Calu3 (cell line): ENCODE measurements at regions of chr12 and their contacts with region 1.

Region 1: DNA sequence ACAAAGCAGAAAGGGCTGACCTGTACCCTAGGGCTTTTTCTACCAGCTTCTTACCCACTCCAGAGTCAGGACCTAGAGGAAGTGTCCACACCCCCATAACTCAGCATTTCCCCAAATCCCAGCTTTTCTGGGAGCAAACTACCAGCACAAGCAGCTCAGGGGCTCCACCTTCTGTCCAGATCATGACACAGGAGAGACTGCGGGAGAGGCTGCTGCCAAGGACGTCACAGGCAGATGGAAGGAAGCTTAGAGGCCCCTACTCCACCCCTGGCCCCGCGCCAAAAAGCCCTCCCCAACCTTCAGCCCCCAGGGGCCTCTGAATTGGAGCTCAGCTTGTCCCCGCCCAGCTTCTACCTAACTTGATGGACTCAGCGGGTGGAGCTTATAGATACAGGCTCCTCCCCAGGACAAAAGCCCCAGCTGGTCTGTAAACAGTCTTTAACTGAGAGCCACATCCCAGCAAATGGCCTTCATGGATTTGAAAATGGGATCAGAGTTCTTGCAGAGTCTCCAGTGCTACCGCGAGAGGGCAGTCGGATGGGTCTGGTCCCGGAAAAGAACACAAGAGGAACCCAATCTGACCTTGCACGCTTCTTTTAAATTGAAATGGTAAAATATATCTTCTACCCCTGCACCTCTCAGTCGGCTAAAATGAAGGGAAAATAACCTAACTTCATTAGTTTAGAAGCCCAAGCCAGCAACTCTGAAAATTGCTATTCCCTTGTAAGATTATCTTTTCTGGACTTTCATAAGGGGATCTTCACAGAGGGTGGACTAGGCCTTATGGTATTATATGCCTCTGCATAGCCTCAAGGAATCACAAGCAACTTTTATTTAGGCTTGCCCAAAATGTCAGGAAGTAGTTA is 6.8 kb upstream of the BAZ2A start:
- DNase-seq: peak; percentile 99
- H3K4me3 Mint-ChIP-seq: peak overlapping the region; percentile 89
- H3K27ac Mint-ChIP-seq: peak overlapping the region; percentile 70
- H3K4me1 Mint-ChIP-seq: peaks cover 44% of the 10 kb centered on the region
- H3K27me3 Mint-ChIP-seq: no peaks in the 10 kb centered on the region
- CTCF ChIP-seq: peak; percentile 74

Region 2: DNA sequence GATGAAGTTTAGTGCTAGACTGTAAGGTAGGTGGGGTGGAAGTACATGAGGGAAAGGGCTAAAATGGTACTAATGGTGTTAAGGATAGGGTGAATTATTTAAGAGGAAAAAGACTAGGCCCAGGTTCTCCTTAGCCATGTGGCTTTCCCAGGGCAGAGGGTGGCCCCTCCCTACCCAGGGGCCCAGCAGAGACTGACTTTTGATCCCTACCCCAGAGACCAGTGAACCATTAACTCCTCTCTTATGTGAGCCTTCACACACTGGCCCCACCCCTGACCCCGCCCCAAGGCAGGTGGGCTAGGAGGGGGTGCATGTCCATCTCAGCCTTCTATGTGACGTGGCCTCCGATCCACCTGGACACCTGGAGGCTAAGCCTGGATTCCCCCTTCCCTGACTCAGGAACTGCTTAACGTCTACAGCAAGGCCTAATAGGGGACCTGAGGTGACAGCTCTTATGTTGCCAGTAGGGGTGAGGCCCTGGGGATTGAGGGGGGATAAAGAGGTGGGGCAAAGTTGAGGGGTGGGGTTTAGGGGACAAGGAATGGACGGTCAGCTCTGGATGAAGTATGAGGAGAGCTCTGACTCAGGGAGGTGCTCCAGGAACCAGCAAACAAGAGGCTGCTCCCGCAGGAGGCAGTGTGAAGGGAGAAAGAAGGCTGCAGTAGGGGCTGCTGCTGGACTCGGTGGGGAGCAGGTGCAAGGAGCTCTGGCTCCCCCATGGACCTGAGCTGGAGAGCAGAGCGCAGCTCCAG is 406.3 kb before region 1 on chr12:
- CTCF ChIA-PET with region 1: no interaction called
- intact Hi-C with region 1: no loop called
- DNase-seq: no peak
- H3K4me3 Mint-ChIP-seq: no peak overlapping the region
- H3K27ac Mint-ChIP-seq: no peak overlapping the region
- H3K4me1 Mint-ChIP-seq: peaks cover 12% of the 10 kb centered on the region
- H3K27me3 Mint-ChIP-seq: no peaks in the 10 kb centered on the region
- CTCF ChIP-seq: no peak

Region 3: GRCh38 chr12:56521590-56522371 is 115.1 kb before region 1 on chr12 and contains the start of gene RBMS2:
- CTCF ChIA-PET with region 1: interaction called, 21 read pairs
- intact Hi-C with region 1: no loop called
- DNase-seq: peak; percentile 81
- H3K4me3 Mint-ChIP-seq: peak within 1 kb of the TSS; percentile 77
- H3K27ac Mint-ChIP-seq: peak within 1 kb of the TSS; percentile 75
- H3K4me1 Mint-ChIP-seq: peaks cover 52% of the 10 kb centered on the region
- H3K27me3 Mint-ChIP-seq: no peaks in the 10 kb centered on the region
- CTCF ChIP-seq: no peak
- total RNA-seq, gene RBMS2: 96.4 and 105 TPM in 2 replicates

Region 4: GRCh38 chr12:56601503-56601902 is 35.4 kb before region 1 on chr12:
- CTCF ChIA-PET with region 1: interaction called, 17 read pairs
- intact Hi-C with region 1: no loop called
- DNase-seq: peak; percentile 52
- H3K4me3 Mint-ChIP-seq: no peak overlapping the region
- H3K27ac Mint-ChIP-seq: peak overlapping the region; percentile 5
- H3K4me1 Mint-ChIP-seq: no peaks in the 10 kb centered on the region
- H3K27me3 Mint-ChIP-seq: no peaks in the 10 kb centered on the region
- CTCF ChIP-seq: no peak

Region 5: GRCh38 chr12:56688129-56688845 is 51.4 kb after region 1 on chr12 and contains the start of gene PTGES3:
- CTCF ChIA-PET with region 1: interaction called, 9 read pairs
- intact Hi-C with region 1: loop called (anchors 5 kb)
- DNase-seq: peak; percentile 99
- H3K4me3 Mint-ChIP-seq: peak within 1 kb of the TSS; percentile 99
- H3K27ac Mint-ChIP-seq: peak within 1 kb of the TSS; percentile 100
- H3K4me1 Mint-ChIP-seq: peaks cover 12% of the 10 kb centered on the region
- H3K27me3 Mint-ChIP-seq: no peaks in the 10 kb centered on the region
- CTCF ChIP-seq: no peak
- total RNA-seq, gene PTGES3: 435 and 437 TPM in 2 replicates

Region 6: DNA sequence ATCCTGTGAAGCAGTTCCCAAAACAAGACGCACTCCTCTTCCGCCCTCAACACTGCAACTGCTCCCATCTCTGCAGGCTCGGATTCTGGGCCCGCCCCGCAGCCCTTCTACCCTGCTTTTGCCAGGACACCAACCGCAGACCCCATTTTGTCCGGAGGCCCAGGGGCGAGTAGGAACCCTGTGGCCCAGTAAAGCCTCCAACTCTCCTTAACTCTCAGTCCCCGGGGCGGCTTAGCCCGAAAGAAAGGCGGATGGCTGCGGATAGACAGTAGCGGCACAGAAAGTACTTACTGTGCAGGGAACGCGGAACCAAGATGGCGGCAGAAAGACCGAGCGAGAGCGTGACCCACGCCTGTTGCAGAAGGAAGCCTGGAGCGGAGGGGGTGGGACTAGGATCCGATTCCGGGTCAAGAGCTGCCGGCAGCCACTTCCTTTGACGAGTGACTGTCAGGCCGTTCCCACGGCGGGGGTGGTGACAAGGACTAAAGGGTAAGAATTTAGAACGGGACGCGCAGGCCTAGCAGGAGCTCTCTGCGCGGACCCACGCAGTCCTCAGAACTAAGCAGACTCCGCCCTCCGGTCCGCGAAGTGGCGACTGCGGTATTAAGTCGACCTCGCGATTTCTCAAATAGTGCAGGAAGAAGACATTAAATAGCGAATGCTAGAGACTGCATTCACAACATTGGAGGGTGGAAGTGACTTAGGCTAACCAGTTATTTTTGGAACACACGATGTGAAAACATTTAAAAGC is 88.2 kb after region 1 on chr12 and contains the start of gene NACA:
- CTCF ChIA-PET with region 1: interaction called, 4 read pairs
- intact Hi-C with region 1: loop called (anchors 10 kb)
- DNase-seq: peak; percentile 98
- H3K4me3 Mint-ChIP-seq: peak within 1 kb of the TSS; percentile 97
- H3K27ac Mint-ChIP-seq: peak within 1 kb of the TSS; percentile 99
- H3K4me1 Mint-ChIP-seq: peaks cover 35% of the 10 kb centered on the region
- H3K27me3 Mint-ChIP-seq: no peaks in the 10 kb centered on the region
- CTCF ChIP-seq: no peak
- total RNA-seq, gene NACA: 771 and 835 TPM in 2 replicates